AG04449 (cell line): ENCODE measurements at regions of chr12 and their contacts with region 1.

Region 1: GRCh38 chr12:124036674-124037109 is 63.7 kb downstream of the ZNF664 start:
- DNase-seq: no peak
- H3K4me3 ChIP-seq: no peak overlapping the region
- CTCF ChIP-seq: peak; percentile 65

Region 2: GRCh38 chr12:123905319-123905925 is 131.3 kb before region 1 on chr12:
- CTCF ChIA-PET with region 1: interaction called, 12 read pairs
- POLR2A ChIA-PET with region 1: no interaction called
- DNase-seq: no peak
- H3K4me3 ChIP-seq: no peak overlapping the region
- CTCF ChIP-seq: peak; percentile 67

Region 3: GRCh38 chr12:124053851-124054250 is 17.2 kb after region 1 on chr12:
- CTCF ChIA-PET with region 1: interaction called, 25 read pairs
- POLR2A ChIA-PET with region 1: no interaction called
- DNase-seq: no peak
- H3K4me3 ChIP-seq: no peak overlapping the region
- CTCF ChIP-seq: peak; percentile 71

Region 4: GRCh38 chr12:124321040-124321481 is 284.4 kb after region 1 on chr12:
- CTCF ChIA-PET with region 1: interaction called, 61 read pairs
- POLR2A ChIA-PET with region 1: interaction called, 3 read pairs
- DNase-seq: no peak
- H3K4me3 ChIP-seq: no peak overlapping the region
- CTCF ChIP-seq: peak; percentile 94

Region 5: DNA sequence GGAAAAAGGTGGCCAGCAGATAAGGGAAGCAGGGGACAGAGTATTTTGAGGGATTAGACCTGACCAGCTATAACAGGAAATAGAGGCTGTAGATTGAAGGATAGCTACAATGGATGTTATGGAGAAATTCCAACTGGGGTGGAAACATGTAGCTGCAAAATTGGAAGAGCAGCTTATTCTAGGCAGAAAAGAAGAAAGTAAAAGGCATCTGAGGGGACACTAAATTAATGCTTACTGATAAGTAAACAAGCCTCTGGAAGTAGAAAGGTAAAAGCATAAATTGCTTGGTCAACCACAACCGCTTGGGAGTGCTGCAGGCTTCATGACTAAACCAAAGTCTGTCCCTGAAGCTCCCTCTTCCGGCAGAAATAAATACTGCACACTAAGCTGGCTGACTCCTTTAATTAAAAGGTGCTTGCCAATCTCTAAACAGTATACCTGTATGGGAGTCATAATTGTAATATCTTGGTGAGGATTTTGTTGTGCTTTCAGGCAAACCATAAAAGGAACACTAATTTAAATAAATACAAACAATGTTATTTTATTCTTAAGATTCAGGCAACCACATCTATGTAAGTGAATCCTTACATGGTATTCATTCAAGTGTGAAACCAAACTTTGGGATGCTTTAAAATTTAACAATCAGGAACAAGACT is 870.0 kb after region 1 on chr12:
- CTCF ChIA-PET with region 1: interaction called, 12 read pairs
- POLR2A ChIA-PET with region 1: interaction called, 4 read pairs
- DNase-seq: no peak
- H3K4me3 ChIP-seq: no peak overlapping the region
- CTCF ChIP-seq: peak; percentile 78